Testis (tissue), 5 donors: ENCODE measurements at regions of chr14 and their contacts with region 1.

Region 1: DNA sequence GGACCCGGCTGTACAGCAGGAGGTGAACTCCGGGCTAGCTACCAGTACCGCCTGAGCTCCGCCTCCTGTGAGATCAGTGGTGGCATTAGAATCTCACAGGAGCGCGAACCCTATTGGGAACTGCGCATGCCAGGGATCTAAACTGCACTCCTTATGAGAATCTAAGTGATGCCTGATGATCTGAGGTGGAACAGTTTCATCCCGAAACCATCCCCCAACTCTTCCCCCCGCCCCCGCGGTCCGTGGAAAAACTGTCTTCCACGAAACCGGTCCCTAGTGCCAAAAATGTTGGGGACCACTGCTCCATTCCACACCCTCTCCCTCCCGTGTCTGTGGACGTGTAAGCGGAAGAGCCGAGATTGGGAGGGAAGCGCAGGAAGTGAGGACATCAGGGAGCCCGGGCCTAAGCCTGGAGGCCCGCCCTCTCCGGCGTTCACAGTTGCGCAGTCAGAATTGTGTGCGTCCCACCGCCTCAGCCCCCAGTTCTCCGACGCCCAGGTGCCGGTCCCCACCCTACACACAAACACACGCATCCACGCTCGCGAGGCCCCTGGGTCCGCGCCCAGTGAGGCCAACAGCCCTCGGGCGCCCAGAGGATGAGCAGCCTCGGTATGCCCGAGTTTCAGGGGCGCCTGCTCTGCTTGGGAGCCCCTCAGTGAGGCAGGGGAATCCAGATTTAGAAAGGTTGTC is 1.8 kb upstream of the RNASE4 start:
- DNase-seq: peak; percentile 94
- H3K4me3 ChIP-seq: peak overlapping the region; percentile 86 to 94
- H3K27ac ChIP-seq: peak overlapping the region; percentile 100
- H3K4me1 ChIP-seq: peaks cover 10% of the 10 kb centered on the region
- H3K27me3 ChIP-seq: no peaks in the 10 kb centered on the region
- CTCF ChIP-seq: no peak
- POLR2A ChIP-seq: peak; percentile 92

Region 2: DNA sequence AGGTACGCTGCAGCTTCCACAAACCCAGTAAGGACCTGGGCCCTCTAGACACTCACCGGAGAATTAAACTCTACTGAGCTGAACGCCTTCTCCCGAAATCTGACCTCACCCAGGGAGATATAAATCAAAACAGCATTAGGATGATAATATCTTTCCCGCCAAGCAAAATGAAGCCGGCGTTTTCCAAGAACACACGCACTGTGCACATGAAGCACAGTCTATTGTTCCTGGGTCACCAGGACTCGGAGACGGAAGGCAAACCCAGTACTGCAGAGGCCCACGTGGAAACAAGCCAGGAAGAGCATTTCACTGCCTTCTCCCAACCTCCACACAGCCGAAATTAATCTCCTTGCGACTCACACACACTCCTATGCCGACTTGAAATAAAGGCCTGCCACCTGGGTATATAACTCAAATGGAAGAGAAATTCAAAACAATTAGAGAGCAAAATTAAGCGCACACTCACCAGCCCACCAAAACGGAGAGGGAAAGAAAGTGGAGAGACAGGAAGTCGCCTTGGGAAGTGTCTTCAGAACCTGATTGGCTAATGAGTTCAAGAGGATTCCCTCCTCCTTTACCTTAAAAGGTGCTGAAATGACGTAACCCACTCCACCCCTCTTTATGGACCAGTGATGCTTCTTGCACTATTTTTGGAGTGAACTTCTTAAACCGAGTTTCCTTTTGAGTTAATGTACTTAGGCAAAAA is 349.6 kb before region 1 on chr14 and contains the start of gene CCNB1IP1:
- intact Hi-C with region 1: loop called (anchors 5 kb)
- DNase-seq: peak; percentile 88
- H3K4me3 ChIP-seq: peak within 1 kb of the TSS; percentile 70 to 81
- H3K27ac ChIP-seq: peak within 1 kb of the TSS; percentile 86 to 96
- H3K4me1 ChIP-seq: no peaks in the 10 kb centered on the region
- H3K27me3 ChIP-seq: no peaks in the 10 kb centered on the region
- CTCF ChIP-seq: no peak
- POLR2A ChIP-seq: no peak
- total RNA-seq, gene CCNB1IP1: 38.7 to 46.7 TPM